CD4-positive, alpha-beta T cell (primary cell): ENCODE measurements at regions of chr4 and their contacts with region 1.

Region 1: DNA sequence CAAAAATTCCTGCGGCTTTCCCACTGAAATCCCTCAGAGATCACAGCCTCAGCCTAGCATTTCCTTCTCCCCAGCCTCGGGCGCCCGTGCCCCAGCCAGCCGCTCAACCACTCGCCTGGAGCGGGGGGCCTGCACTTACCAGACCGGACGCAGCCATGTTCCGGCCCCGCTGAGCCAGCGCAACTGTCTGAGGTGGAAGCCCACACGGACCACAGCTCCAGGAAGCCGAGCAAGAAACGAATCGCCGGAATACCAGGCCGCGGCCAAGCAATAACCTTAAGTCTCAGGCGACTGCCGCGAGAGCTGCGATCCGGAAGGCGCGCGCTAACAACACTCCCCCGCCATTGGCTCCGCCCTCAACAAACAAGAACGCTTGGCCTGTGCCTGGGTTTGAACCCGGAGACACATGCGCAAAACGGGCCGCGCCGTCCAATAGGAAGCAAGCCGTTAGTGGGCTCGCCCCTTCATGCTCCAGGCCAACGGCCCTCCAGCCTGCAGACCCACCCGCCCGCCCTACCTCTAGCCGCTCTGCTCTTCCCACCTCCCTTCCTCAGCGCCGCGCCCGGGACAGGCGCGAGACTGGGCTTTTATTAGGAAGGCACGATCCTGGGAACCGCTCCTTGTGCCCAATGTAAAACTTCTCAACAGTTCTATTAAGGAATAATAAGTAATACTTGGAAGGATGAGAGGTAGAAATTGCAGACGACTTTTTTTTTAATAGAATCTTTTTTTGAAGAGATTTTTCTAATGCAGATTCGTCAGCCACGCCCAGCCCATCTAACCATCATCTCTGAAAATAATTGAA is at the start of gene CENPC:
- DNase-seq: peak; percentile 80 to 96 (median 88)
- ATAC-seq: peak; percentile 87
- H3K4me3 ChIP-seq: peak within 1 kb of the TSS; percentile 84
- H3K4me3 Mint-ChIP-seq: peak within 1 kb of the TSS; percentile 98
- H3K27ac ChIP-seq: peak within 1 kb of the TSS; percentile 96
- H3K27ac Mint-ChIP-seq: peak within 1 kb of the TSS; percentile 97
- H3K4me1 ChIP-seq: no peaks in the 10 kb centered on the region
- H3K4me1 Mint-ChIP-seq: peaks cover 44% of the 10 kb centered on the region
- H3K27me3 ChIP-seq: no peaks in the 10 kb centered on the region
- H3K27me3 Mint-ChIP-seq: no peaks in the 10 kb centered on the region
- CTCF ChIP-seq: no peak
- total RNA-seq, gene CENPC: 115 to 116 TPM

Region 2: DNA sequence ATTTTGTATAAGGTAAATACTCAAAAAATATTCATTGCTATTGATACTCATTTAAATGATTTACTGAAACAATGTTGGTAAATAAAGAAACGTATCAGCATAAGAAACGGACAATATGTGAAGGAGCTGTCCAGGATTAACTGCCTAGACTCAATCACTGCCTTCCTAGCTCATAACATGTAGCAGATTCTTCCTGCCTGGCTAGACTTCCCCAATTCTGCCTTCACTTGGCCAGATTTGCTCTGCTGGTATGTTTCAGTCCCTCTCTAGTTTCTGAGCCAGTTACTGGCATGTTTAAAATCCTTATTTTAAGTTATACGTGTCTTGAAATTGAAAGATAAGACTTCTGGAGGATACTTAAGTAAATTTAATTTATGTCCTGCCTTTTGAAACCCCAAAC is 740.4 kb before region 1 on chr4:
- CTCF ChIA-PET with region 1: no interaction called
- POLR2A ChIA-PET with region 1: no interaction called
- intact Hi-C with region 1: no loop called
- DNase-seq: no peak
- ATAC-seq: no peak
- H3K4me3 ChIP-seq: no peak overlapping the region
- H3K4me3 Mint-ChIP-seq: no peak overlapping the region
- H3K27ac ChIP-seq: no peak overlapping the region
- H3K27ac Mint-ChIP-seq: no peak overlapping the region
- H3K4me1 ChIP-seq: no peaks in the 10 kb centered on the region
- H3K4me1 Mint-ChIP-seq: no peaks in the 10 kb centered on the region
- H3K27me3 ChIP-seq: no peaks in the 10 kb centered on the region
- H3K27me3 Mint-ChIP-seq: no peaks in the 10 kb centered on the region
- CTCF ChIP-seq: no peak

Region 3: DNA sequence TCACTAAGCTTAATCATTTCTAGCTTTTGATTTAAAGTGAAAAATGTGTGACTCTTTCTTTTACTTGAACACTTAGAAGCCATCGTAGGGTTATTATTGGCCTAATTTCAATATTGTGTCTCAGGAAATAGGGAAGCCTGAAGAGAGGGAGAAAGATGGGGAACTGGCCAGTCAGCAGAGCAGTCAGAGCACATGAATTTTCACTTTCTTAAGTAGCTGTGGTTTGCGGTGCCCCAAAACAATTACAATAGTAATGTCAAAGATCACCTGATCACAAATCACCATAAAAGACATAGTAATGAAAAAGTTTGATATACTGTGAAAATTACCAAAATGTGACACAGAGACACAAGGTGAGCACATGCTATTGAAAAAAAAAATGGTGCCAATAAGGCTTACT is 45.6 kb before region 1 on chr4:
- CTCF ChIA-PET with region 1: no interaction called
- POLR2A ChIA-PET with region 1: no interaction called
- intact Hi-C with region 1: no loop called
- DNase-seq: no peak
- ATAC-seq: no peak
- H3K4me3 ChIP-seq: no peak overlapping the region
- H3K4me3 Mint-ChIP-seq: no peak overlapping the region
- H3K27ac ChIP-seq: no peak overlapping the region
- H3K27ac Mint-ChIP-seq: no peak overlapping the region
- H3K4me1 ChIP-seq: no peaks in the 10 kb centered on the region
- H3K4me1 Mint-ChIP-seq: peaks cover 42% of the 10 kb centered on the region
- H3K27me3 ChIP-seq: no peaks in the 10 kb centered on the region
- H3K27me3 Mint-ChIP-seq: no peaks in the 10 kb centered on the region
- CTCF ChIP-seq: no peak

Region 4: GRCh38 chr4:67535280-67535840 is 10.0 kb before region 1 on chr4:
- CTCF ChIA-PET with region 1: no interaction called
- POLR2A ChIA-PET with region 1: interaction called, 13 read pairs
- intact Hi-C with region 1: no loop called
- DNase-seq: no peak
- ATAC-seq: no peak
- H3K4me3 ChIP-seq: no peak overlapping the region
- H3K4me3 Mint-ChIP-seq: no peak overlapping the region
- H3K27ac ChIP-seq: no peak overlapping the region
- H3K27ac Mint-ChIP-seq: no peak overlapping the region
- H3K4me1 ChIP-seq: no peaks in the 10 kb centered on the region
- H3K4me1 Mint-ChIP-seq: peaks cover 56% of the 10 kb centered on the region
- H3K27me3 ChIP-seq: no peaks in the 10 kb centered on the region
- H3K27me3 Mint-ChIP-seq: no peaks in the 10 kb centered on the region
- CTCF ChIP-seq: no peak

Region 5: GRCh38 chr4:67624939-67625338 is 79.5 kb after region 1 on chr4:
- CTCF ChIA-PET with region 1: no interaction called
- POLR2A ChIA-PET with region 1: no interaction called
- intact Hi-C with region 1: loop called (anchors 5 kb)
- DNase-seq: peak in 1 of 14 experiments; percentile 5
- ATAC-seq: no peak
- H3K4me3 ChIP-seq: no peak overlapping the region
- H3K4me3 Mint-ChIP-seq: no peak overlapping the region
- H3K27ac ChIP-seq: no peak overlapping the region
- H3K27ac Mint-ChIP-seq: no peak overlapping the region
- H3K4me1 ChIP-seq: no peaks in the 10 kb centered on the region
- H3K4me1 Mint-ChIP-seq: no peaks in the 10 kb centered on the region
- H3K27me3 ChIP-seq: no peaks in the 10 kb centered on the region
- H3K27me3 Mint-ChIP-seq: no peaks in the 10 kb centered on the region
- CTCF ChIP-seq: peak; percentile 8

Region 6: DNA sequence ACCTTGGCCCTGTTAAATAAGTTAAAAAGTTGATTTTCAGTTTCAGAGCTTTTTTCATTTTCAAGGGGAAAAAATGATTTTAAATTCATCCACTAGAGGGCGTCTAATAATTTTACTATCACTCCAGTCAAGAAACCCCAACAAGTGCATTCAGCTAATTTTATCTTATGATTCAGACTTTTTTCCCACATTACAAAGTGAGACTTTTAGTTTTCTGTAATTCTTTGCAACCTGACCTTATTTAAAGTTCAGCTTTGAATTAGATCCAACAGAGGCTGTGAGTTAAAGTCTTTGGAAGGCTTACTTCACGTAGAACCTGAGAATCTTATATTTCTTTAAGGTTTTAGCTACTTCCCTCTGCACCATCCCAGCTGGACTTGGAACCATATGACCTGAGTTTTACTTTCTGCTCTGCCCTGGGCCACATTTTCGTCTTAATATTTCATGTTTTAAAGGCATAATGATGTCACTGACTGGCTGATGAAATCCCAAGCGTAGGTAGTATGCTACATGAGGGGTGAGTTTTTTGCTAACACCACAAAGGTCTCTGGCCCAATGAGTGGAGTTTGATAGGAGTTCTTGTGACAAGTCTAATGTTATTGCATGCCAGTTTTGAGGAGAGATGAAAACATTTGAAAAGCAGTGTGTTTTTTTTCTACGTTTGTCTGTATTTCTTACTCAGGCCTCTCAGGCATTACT is 201.5 kb after region 1 on chr4:
- CTCF ChIA-PET with region 1: interaction called, 3 read pairs
- POLR2A ChIA-PET with region 1: interaction called, 3 read pairs
- intact Hi-C with region 1: loop called (anchors 1 to 5 kb)
- DNase-seq: peak in 3 of 14 experiments; percentile 43 to 54 (median 45)
- ATAC-seq: no peak
- H3K4me3 ChIP-seq: no peak overlapping the region
- H3K4me3 Mint-ChIP-seq: no peak overlapping the region
- H3K27ac ChIP-seq: no peak overlapping the region
- H3K27ac Mint-ChIP-seq: no peak overlapping the region
- H3K4me1 ChIP-seq: no peaks in the 10 kb centered on the region
- H3K4me1 Mint-ChIP-seq: no peaks in the 10 kb centered on the region
- H3K27me3 ChIP-seq: no peaks in the 10 kb centered on the region
- H3K27me3 Mint-ChIP-seq: no peaks in the 10 kb centered on the region
- CTCF ChIP-seq: peak; percentile 92

Region 7: DNA sequence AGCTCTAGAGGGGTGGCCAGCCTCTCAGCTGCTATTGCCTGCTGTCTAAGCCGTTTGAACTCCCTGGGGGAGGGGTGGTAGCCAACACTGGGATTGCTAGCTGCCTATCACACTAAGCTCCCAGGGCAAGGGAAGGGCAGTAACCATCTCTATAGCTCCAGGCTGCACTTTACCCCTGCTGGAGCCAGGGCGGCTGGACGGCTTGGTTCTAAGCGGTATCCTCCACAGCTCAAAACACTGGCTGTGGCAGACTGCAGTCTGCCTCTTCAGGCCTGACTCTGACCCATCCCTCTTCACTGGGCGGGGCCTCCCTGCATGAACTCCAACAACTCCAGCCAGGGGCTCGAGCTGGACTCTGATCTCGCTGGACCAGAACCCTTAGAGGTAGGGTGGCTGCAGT is 264.1 kb after region 1 on chr4:
- CTCF ChIA-PET with region 1: no interaction called
- POLR2A ChIA-PET with region 1: no interaction called
- intact Hi-C with region 1: no loop called
- DNase-seq: no peak
- ATAC-seq: no peak
- H3K4me3 ChIP-seq: no peak overlapping the region
- H3K4me3 Mint-ChIP-seq: no peak overlapping the region
- H3K27ac ChIP-seq: no peak overlapping the region
- H3K27ac Mint-ChIP-seq: no peak overlapping the region
- H3K4me1 ChIP-seq: no peaks in the 10 kb centered on the region
- H3K4me1 Mint-ChIP-seq: no peaks in the 10 kb centered on the region
- H3K27me3 ChIP-seq: no peaks in the 10 kb centered on the region
- H3K27me3 Mint-ChIP-seq: no peaks in the 10 kb centered on the region
- CTCF ChIP-seq: no peak

Region 8: DNA sequence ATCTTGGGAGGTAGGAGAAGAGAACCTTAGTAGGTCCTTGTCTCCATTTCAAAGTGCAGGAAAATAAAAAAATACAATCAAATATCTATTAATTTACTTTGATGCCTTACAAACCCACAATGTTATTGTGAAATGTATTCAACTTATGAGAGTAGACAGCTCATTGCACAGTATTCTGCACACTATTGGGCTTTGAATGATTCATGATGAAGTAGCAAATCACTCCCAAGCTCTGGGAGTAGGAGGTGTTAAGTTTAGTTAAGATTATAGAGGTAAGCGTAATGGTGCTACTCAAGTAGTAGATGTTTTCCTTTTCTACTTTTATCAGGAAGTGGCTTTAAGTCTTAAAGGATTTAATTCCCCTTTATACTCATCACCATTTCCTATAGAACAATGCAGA is 450.7 kb after region 1 on chr4:
- CTCF ChIA-PET with region 1: no interaction called
- POLR2A ChIA-PET with region 1: no interaction called
- intact Hi-C with region 1: loop called in 1 of 2 experiments (anchors 5 kb)
- DNase-seq: no peak
- ATAC-seq: no peak
- H3K4me3 ChIP-seq: no peak overlapping the region
- H3K4me3 Mint-ChIP-seq: no peak overlapping the region
- H3K27ac ChIP-seq: no peak overlapping the region
- H3K27ac Mint-ChIP-seq: no peak overlapping the region
- H3K4me1 ChIP-seq: no peaks in the 10 kb centered on the region
- H3K4me1 Mint-ChIP-seq: peaks cover 6% of the 10 kb centered on the region
- H3K27me3 ChIP-seq: no peaks in the 10 kb centered on the region
- H3K27me3 Mint-ChIP-seq: no peaks in the 10 kb centered on the region
- CTCF ChIP-seq: no peak

Region 9: GRCh38 chr4:68349649-68350360 is 804.4 kb after region 1 on chr4 and contains the start of gene YTHDC1:
- CTCF ChIA-PET with region 1: no interaction called
- POLR2A ChIA-PET with region 1: interaction called, 3 read pairs
- intact Hi-C with region 1: loop called in 1 of 2 experiments (anchors 5 kb)
- DNase-seq: peak; percentile 89 to 99 (median 95)
- ATAC-seq: peak; percentile 94
- H3K4me3 ChIP-seq: peak within 1 kb of the TSS; percentile 87
- H3K4me3 Mint-ChIP-seq: peak within 1 kb of the TSS; percentile 99
- H3K27ac ChIP-seq: peak within 1 kb of the TSS; percentile 86 to 98
- H3K27ac Mint-ChIP-seq: peak within 1 kb of the TSS; percentile 100
- H3K4me1 ChIP-seq: peaks cover 18% of the 10 kb centered on the region
- H3K4me1 Mint-ChIP-seq: peaks cover 49% of the 10 kb centered on the region
- H3K27me3 ChIP-seq: no peaks in the 10 kb centered on the region
- H3K27me3 Mint-ChIP-seq: no peaks in the 10 kb centered on the region
- CTCF ChIP-seq: no peak
- total RNA-seq, gene YTHDC1: 383 to 389 TPM